ENCODE measurements at regions of chr1 and their contacts with region 1.

Region 1: GRCh38 chr1:27725374-27726173 is at the start of gene FAM76A:
- DNase-seq: peak; percentile 99 to 100 (median 100)
- H3K4me3 ChIP-seq: peak within 1 kb of the TSS; percentile 66
- H3K4me3 Mint-ChIP-seq: peak within 1 kb of the TSS; percentile 87 to 95 (median 91)
- H3K27ac ChIP-seq: peak within 1 kb of the TSS; percentile 87
- H3K27ac Mint-ChIP-seq: peak within 1 kb of the TSS; percentile 94 to 99 (median 98)
- H3K4me1 ChIP-seq: peaks cover 18% of the 10 kb centered on the region
- H3K4me1 Mint-ChIP-seq: peaks cover 21 to 35% (median 24%) of the 10 kb centered on the region in 3 donors
- H3K27me3 ChIP-seq: no peaks in the 10 kb centered on the region
- H3K27me3 Mint-ChIP-seq: no peaks in the 10 kb centered on the region
- total RNA-seq, gene FAM76A: 13.2 to 13.7 TPM

Region 2: GRCh38 chr1:27830621-27831424 is 105.2 kb after region 1 on chr1 and contains the start of gene PPP1R8:
- CTCF ChIA-PET with region 1: no interaction called
- POLR2A ChIA-PET with region 1: interaction called, 11 read pairs
- DNase-seq: peak; percentile 76 to 89 (median 83)
- H3K4me3 ChIP-seq: peak within 1 kb of the TSS; percentile 74
- H3K4me3 Mint-ChIP-seq: peak within 1 kb of the TSS; percentile 91 to 99 (median 94)
- H3K27ac ChIP-seq: peak within 1 kb of the TSS; percentile 84
- H3K27ac Mint-ChIP-seq: peak within 1 kb of the TSS; percentile 84 to 99 (median 94)
- H3K4me1 ChIP-seq: peaks cover 33% of the 10 kb centered on the region
- H3K4me1 Mint-ChIP-seq: peaks cover 26 to 50% (median 37%) of the 10 kb centered on the region in 3 donors
- H3K27me3 ChIP-seq: no peaks in the 10 kb centered on the region
- H3K27me3 Mint-ChIP-seq: no peaks in the 10 kb centered on the region
- total RNA-seq, gene PPP1R8: 66.3 to 70.0 TPM

Region 3: GRCh38 chr1:27959400-27960217 is 234.0 kb after region 1 on chr1 and contains the start of gene XKR8:
- CTCF ChIA-PET with region 1: no interaction called
- POLR2A ChIA-PET with region 1: no interaction called
- DNase-seq: peak; percentile 79 to 90 (median 81)
- H3K4me3 ChIP-seq: peak within 1 kb of the TSS; percentile 86
- H3K4me3 Mint-ChIP-seq: peak within 1 kb of the TSS; percentile 85 to 93 (median 87)
- H3K27ac ChIP-seq: peak within 1 kb of the TSS; percentile 69
- H3K27ac Mint-ChIP-seq: peak within 1 kb of the TSS; percentile 78 to 95 (median 90)
- H3K4me1 ChIP-seq: peaks cover 20% of the 10 kb centered on the region
- H3K4me1 Mint-ChIP-seq: peaks cover 20 to 31% (median 22%) of the 10 kb centered on the region in 3 donors
- H3K27me3 ChIP-seq: no peaks in the 10 kb centered on the region
- H3K27me3 Mint-ChIP-seq: peaks cover 4 to 8% of the 10 kb centered on the region in 2 donors
- total RNA-seq, gene XKR8: 7.3 to 8.9 TPM